ENCODE measurements at regions of chr2 and their contacts with region 1.

Region 1: DNA sequence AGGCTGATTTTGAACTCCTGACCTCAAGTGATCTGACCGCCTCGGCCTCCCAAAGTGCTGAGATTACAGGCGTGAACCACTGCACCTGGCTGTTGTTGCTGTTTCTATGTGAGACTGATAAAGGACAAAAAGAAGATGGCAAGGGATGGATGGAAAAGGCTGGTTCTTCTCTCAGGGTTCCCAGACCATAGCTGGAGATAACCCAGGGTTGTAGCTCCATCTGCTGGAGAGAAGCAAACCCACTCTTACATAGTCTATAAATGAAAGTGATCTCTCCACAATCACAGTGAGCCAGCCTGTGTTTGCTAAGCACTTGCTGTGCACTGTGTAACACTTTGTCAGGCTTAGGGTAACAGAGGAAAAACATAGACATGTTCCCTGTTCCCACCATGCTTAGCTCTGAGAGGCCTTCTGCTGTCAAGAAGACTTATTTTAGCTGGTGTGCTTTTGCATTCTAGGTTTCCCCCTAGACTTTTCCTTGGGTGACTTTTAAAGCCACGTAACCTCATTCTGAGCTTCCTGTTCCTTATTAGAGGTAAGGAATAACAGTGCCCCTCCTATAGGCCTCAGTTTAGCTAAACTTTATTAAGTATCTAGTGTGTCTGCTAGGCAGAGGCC is 49.7 kb downstream of the LIMS1 start:
- DNase-seq: no peak
- H3K4me3 ChIP-seq: no peak overlapping the region
- H3K27ac ChIP-seq: no peak overlapping the region
- H3K4me1 ChIP-seq: peaks cover 0 to 4% (median 3%) of the 10 kb centered on the region in 4 experiments; a peak in 4 of 7 replicates
- H3K27me3 ChIP-seq: no peaks in the 10 kb centered on the region
- CTCF ChIP-seq: peak in 2 of 3 experiments; percentile 72 to 82; a peak in 3 of 4 replicates
- EP300 ChIP-seq: no peak
- POLR2A ChIP-seq: no peak
- RAD21 ChIP-seq: peak; percentile 97

Region 2: GRCh38 chr2:108351889-108352288 is 232.1 kb before region 1 on chr2:
- CTCF ChIA-PET with region 1: interaction called, 11 read pairs
- POLR2A ChIA-PET with region 1: no interaction called
- DNase-seq: no peak
- H3K4me3 ChIP-seq: no peak overlapping the region; a peak in 1 of 8 replicates
- H3K27ac ChIP-seq: no peak overlapping the region
- H3K4me1 ChIP-seq: peaks cover 0 to 2% (median 0%) of the 10 kb centered on the region in 4 experiments; a peak in 2 of 7 replicates
- H3K27me3 ChIP-seq: no peaks in the 10 kb centered on the region
- CTCF ChIP-seq: no peak
- EP300 ChIP-seq: no peak
- POLR2A ChIP-seq: no peak
- RAD21 ChIP-seq: no peak

Region 3: DNA sequence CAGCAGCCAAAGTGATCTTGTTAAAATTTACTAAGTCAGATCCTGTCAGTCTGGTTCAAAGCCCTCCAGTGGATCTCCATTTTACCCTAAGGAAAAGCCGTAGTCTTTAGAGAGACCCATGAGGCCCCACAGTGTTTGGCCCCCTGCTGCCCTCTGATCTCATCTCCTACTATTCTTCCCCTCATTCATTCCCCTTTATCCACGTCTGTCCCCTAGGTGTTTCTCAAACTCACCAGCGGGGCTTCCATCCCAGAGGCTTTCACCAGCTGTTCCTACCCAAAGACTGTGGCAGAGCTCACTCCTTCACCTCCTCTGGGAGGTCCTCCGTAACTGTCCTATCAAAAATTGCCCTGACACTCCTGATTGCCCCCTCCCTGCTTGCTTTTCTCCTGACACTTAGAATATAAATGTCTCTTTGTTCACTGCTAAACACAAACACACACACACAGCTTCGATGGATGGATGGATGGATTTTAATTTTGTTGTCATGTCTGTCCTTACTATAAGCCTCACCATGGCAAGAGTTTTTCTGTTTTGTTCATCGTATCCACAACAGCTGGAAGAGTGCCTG is 23.7 kb before region 1 on chr2:
- CTCF ChIA-PET with region 1: no interaction called
- POLR2A ChIA-PET with region 1: no interaction called
- DNase-seq: no peak
- H3K4me3 ChIP-seq: no peak overlapping the region
- H3K27ac ChIP-seq: no peak overlapping the region
- H3K4me1 ChIP-seq: peaks cover 0 to 9% (median 4%) of the 10 kb centered on the region in 4 experiments; a peak in 5 of 7 replicates
- H3K27me3 ChIP-seq: no peaks in the 10 kb centered on the region
- CTCF ChIP-seq: no peak
- EP300 ChIP-seq: no peak
- POLR2A ChIP-seq: no peak
- RAD21 ChIP-seq: 0 out of 4 replicates have a peak, but pooled peaks of 1 of the 2 experiments have one; percentile 3

Region 4: GRCh38 chr2:108594132-108594981 is 10.3 kb after region 1 on chr2:
- CTCF ChIA-PET with region 1: interaction called, 13 read pairs
- POLR2A ChIA-PET with region 1: no interaction called
- DNase-seq: no peak
- H3K4me3 ChIP-seq: no peak overlapping the region
- H3K27ac ChIP-seq: no peak overlapping the region
- H3K4me1 ChIP-seq: peaks cover 0 to 7% (median 4%) of the 10 kb centered on the region in 4 experiments; a peak in 3 of 7 replicates
- H3K27me3 ChIP-seq: no peaks in the 10 kb centered on the region
- CTCF ChIP-seq: no peak
- EP300 ChIP-seq: no peak
- POLR2A ChIP-seq: no peak
- RAD21 ChIP-seq: no peak

Region 5: DNA sequence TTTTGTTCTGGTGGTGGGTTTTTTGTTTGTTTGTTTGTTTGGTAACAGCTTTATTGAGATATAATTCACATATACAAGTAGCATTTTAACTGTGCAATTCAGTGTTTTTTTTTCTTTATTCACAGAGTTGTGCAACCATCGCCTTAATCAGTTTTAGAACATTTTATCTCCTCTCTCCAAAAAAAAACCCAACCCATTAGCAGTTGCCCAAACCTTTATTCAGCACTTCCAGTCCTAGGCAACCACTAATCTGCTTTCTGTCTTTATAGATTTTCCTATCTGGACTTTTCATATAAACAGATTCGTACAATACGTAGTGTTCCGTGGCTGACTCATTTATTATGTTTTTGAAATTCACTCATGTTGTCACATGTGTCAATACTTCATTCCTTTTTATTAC is 241.2 kb after region 1 on chr2:
- CTCF ChIA-PET with region 1: no interaction called
- POLR2A ChIA-PET with region 1: no interaction called
- DNase-seq: no peak
- H3K4me3 ChIP-seq: no peak overlapping the region
- H3K27ac ChIP-seq: no peak overlapping the region
- H3K4me1 ChIP-seq: no peaks in the 10 kb centered on the region
- H3K27me3 ChIP-seq: no peaks in the 10 kb centered on the region
- CTCF ChIP-seq: no peak
- EP300 ChIP-seq: no peak
- POLR2A ChIP-seq: no peak
- RAD21 ChIP-seq: no peak